CD8-positive, alpha-beta T cell (primary cell): ENCODE measurements at regions of chr4 and their contacts with region 1.

Region 1: GRCh38 chr4:155271557-155271956 is 63.1 kb downstream of the NPY2R start:
- DNase-seq: no peak
- ATAC-seq: no peak
- H3K4me3 ChIP-seq: no peak overlapping the region
- H3K4me3 Mint-ChIP-seq: no peak overlapping the region
- H3K27ac ChIP-seq: no peak overlapping the region
- H3K27ac Mint-ChIP-seq: no peak overlapping the region
- H3K4me1 ChIP-seq: no peaks in the 10 kb centered on the region
- H3K4me1 Mint-ChIP-seq: no peaks in the 10 kb centered on the region
- H3K27me3 ChIP-seq: no peaks in the 10 kb centered on the region
- H3K27me3 Mint-ChIP-seq: no peaks in the 10 kb centered on the region
- CTCF ChIP-seq: no peak

Region 2: GRCh38 chr4:154822775-154823174 is 448.8 kb before region 1 on chr4:
- CTCF ChIA-PET with region 1: no interaction called
- POLR2A ChIA-PET with region 1: no interaction called
- intact Hi-C with region 1: loop called in 1 of 2 experiments (anchors 5 kb)
- DNase-seq: no peak
- ATAC-seq: no peak
- H3K4me3 ChIP-seq: no peak overlapping the region
- H3K4me3 Mint-ChIP-seq: no peak overlapping the region
- H3K27ac ChIP-seq: no peak overlapping the region
- H3K27ac Mint-ChIP-seq: no peak overlapping the region
- H3K4me1 ChIP-seq: no peaks in the 10 kb centered on the region
- H3K4me1 Mint-ChIP-seq: no peaks in the 10 kb centered on the region
- H3K27me3 ChIP-seq: no peaks in the 10 kb centered on the region
- H3K27me3 Mint-ChIP-seq: peaks cover 2% of the 10 kb centered on the region
- CTCF ChIP-seq: no peak